MCF 10A (cell line): ENCODE measurements at regions of chr7 and their contacts with region 1.

Region 1: DNA sequence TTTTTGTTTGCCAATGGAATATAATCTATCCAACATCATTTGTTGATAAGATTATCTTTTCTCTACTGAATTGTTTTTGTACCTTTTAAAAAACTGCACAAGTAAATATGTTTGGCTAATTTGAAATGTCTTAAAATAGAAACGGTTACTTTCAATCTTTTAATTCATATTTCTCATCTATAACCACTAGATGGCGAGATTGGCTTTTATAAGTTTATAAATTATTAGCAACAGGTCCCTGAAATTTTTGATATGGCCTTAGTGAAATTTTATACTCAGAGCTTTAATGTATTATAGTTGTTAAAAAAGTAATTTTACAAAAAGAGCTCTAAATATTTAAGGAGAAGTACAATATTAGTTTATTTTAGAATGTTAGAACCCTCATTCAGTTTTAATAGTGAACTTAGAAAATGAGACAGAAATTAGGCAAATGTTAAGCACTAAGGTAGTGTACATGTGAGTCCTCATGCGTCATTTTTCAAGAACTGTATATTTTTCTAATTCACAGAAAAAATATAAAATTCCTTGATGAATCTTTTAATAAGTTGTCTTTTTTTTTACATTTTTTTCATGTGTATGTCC is 592.5 kb downstream of the ARL4A start:
- DNase-seq: peak; percentile 44
- H3K4me3 Mint-ChIP-seq: no peak overlapping the region
- H3K27ac Mint-ChIP-seq: no peak overlapping the region
- H3K4me1 Mint-ChIP-seq: no peaks in the 10 kb centered on the region
- H3K27me3 Mint-ChIP-seq: peaks cover 2% of the 10 kb centered on the region
- CTCF ChIP-seq: peak; percentile 33

Region 2: DNA sequence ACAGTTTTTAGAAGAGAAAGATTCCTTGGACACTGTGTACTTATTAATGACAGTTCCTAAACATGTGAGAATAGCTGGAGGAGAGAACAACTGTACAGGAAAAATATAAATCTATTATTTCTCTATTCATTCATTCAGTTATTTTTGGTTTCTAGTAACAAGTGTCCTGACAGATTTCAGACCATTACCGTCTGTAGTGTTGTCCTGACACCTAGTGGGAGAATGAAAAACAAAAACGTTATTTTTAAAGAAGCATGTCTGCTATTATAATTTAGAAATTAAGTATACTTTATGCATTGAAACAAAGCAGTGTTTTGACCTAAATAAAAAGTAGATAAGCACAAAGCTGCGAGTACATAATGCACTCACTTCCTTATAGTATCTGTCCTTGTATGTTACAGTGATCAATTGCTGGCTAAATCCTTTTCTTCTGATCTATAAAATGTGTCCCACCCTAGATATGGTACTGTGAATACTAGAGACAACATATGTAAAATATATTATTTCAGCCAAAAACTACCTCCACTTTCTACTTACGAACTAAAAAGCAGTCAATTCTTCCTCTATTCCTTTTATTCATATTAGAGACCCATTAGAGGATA is 16.9 kb before region 1 on chr7:
- CTCF ChIA-PET with region 1: interaction called, 12 read pairs
- POLR2A ChIA-PET with region 1: no interaction called
- intact Hi-C with region 1: no loop called
- DNase-seq: peak; percentile 57
- H3K4me3 Mint-ChIP-seq: no peak overlapping the region
- H3K27ac Mint-ChIP-seq: no peak overlapping the region
- H3K4me1 Mint-ChIP-seq: no peaks in the 10 kb centered on the region
- H3K27me3 Mint-ChIP-seq: no peaks in the 10 kb centered on the region
- CTCF ChIP-seq: peak; percentile 59

Region 3: DNA sequence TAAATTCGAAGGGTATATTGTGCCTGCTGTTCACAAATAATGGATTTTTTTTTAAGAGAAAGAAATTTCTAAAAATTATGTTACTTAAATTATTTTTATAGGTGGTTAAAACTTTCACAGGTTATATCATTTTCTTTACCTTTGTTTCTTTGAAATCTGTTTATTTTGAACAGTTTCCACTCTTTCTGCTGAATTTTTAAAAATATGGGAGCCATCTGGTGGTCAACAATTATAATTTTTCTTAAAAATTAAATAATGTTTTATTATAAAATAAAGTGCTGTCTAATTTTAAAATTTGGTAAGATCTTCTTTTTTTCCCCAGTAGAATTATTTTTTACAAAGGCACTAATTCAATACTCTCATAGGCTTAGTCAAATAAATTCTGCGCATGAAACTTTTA is 445.6 kb after region 1 on chr7:
- CTCF ChIA-PET with region 1: interaction called, 16 read pairs
- POLR2A ChIA-PET with region 1: no interaction called
- intact Hi-C with region 1: loop called (anchors 5 kb)
- DNase-seq: no peak
- H3K4me3 Mint-ChIP-seq: no peak overlapping the region
- H3K27ac Mint-ChIP-seq: no peak overlapping the region
- H3K4me1 Mint-ChIP-seq: no peaks in the 10 kb centered on the region
- H3K27me3 Mint-ChIP-seq: no peaks in the 10 kb centered on the region
- CTCF ChIP-seq: no peak

Region 4: GRCh38 chr7:13742811-13743210 is 462.9 kb after region 1 on chr7:
- CTCF ChIA-PET with region 1: interaction called, 29 read pairs
- POLR2A ChIA-PET with region 1: interaction called, 3 read pairs
- intact Hi-C with region 1: loop called (anchors 5 kb)
- DNase-seq: peak; percentile 66
- H3K4me3 Mint-ChIP-seq: no peak overlapping the region
- H3K27ac Mint-ChIP-seq: peak overlapping the region; percentile 4
- H3K4me1 Mint-ChIP-seq: no peaks in the 10 kb centered on the region
- H3K27me3 Mint-ChIP-seq: no peaks in the 10 kb centered on the region
- CTCF ChIP-seq: no peak

Region 5: GRCh38 chr7:14457568-14458453 is 1177.9 kb after region 1 on chr7:
- CTCF ChIA-PET with region 1: interaction called, 20 read pairs
- POLR2A ChIA-PET with region 1: no interaction called
- intact Hi-C with region 1: loop called (anchors 1 kb)
- DNase-seq: peak; percentile 81
- H3K4me3 Mint-ChIP-seq: no peak overlapping the region
- H3K27ac Mint-ChIP-seq: no peak overlapping the region
- H3K4me1 Mint-ChIP-seq: no peaks in the 10 kb centered on the region
- H3K27me3 Mint-ChIP-seq: no peaks in the 10 kb centered on the region
- CTCF ChIP-seq: peak; percentile 76

Region 6: DNA sequence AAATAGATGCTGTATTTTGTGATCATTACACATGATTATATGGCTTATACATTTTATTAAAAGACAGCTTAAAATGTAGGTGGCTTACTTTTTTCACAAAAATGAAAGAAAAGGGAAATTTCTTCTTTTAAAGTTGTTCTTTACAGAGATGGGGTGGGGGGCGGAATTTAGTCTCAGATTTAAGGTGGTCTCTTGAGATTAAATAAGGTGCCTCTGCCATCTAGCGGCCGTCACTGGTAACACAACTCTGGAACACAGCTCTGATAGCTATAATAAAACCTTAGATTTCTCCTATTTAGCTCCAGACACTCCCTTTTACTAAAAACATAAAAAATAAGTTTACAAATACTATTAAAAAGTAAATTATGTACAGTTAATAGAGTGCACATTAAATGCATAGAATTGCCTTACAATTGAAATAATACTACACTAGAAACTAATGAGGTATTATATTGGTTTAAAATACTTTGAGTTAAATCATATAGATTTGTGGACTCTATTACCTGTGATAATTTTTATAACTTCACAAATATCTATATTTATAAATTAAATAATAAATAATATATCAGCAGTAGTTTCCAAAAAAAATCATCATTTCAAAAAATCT is 1411.8 kb after region 1 on chr7:
- CTCF ChIA-PET with region 1: interaction called, 90 read pairs
- POLR2A ChIA-PET with region 1: interaction called, 3 read pairs
- intact Hi-C with region 1: loop called (anchors 1 kb)
- DNase-seq: peak; percentile 42
- H3K4me3 Mint-ChIP-seq: no peak overlapping the region
- H3K27ac Mint-ChIP-seq: no peak overlapping the region
- H3K4me1 Mint-ChIP-seq: no peaks in the 10 kb centered on the region
- H3K27me3 Mint-ChIP-seq: peaks cover 33% of the 10 kb centered on the region
- CTCF ChIP-seq: peak; percentile 88

Region 7: DNA sequence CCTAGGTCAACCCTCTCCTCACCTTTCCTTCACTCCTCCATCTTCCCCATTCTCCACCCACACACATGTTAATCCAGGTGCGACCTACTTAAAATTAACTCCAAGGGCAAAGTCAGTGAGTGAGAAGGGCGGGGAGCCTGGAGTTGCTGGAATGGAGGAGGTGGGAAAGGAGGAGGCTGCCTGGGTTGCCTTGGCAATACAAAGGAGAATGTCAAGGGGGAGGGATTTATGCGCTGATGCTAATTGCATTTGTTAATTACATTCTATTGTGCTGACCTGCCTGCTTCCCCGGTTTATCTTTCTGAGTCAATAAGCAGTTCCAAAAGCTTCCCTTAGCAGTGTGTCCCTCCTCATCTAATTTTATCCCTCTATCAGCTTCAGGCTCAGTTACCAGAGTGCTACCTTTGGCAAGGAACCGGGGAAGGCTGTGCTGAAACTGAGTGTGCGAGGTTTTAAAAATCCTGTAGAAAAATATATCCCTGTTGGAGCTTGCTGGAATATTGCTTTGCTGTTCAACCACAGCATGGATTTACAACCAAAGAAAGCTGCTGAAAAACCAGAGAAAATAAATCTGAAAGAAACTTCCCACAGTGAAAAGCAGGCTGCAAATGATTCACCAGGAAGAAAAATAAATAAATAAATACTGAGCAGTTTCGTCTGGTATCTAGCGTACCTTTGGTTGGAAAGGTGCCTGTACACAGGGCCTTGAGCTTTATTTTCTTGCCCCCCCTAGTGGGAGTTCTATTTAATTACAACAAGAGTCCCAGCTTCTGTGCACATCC is 1735.8 kb after region 1 on chr7:
- CTCF ChIA-PET with region 1: interaction called, 5 read pairs
- POLR2A ChIA-PET with region 1: no interaction called
- intact Hi-C with region 1: loop called (anchors 10 kb)
- DNase-seq: peak; percentile 86
- H3K4me3 Mint-ChIP-seq: peak overlapping the region; percentile 43
- H3K27ac Mint-ChIP-seq: no peak overlapping the region
- H3K4me1 Mint-ChIP-seq: no peaks in the 10 kb centered on the region
- H3K27me3 Mint-ChIP-seq: peaks cover 57% of the 10 kb centered on the region
- CTCF ChIP-seq: peak; percentile 55